Right ventricle myocardium inferior (tissue), 1 donor: ENCODE measurements at regions of chr1 and their contacts with region 1.

Region 1: GRCh38 chr1:111948209-111949171 is 41.0 kb downstream of the KCND3 start:
- DNase-seq: peak; percentile 73
- ATAC-seq: peak; percentile 84

Region 2: GRCh38 chr1:111739194-111739924 is 209.1 kb before region 1 on chr1 and contains the start of gene INKA2:
- intact Hi-C with region 1: no loop called
- DNase-seq: peak; percentile 97
- ATAC-seq: peak; percentile 87
- total RNA-seq, gene INKA2: 28.5 TPM

Region 3: GRCh38 chr1:111904478-111905218 is 43.8 kb before region 1 on chr1:
- intact Hi-C with region 1: loop called (anchors 5 kb)
- DNase-seq: no peak
- ATAC-seq: peak; percentile 92

Region 4: GRCh38 chr1:112040891-112041740 is 92.6 kb after region 1 on chr1:
- intact Hi-C with region 1: no loop called
- DNase-seq: no peak
- ATAC-seq: no peak